Heart right ventricle (tissue), 16 donors: ENCODE measurements at regions of chr10 and their contacts with region 1.

Region 1: DNA sequence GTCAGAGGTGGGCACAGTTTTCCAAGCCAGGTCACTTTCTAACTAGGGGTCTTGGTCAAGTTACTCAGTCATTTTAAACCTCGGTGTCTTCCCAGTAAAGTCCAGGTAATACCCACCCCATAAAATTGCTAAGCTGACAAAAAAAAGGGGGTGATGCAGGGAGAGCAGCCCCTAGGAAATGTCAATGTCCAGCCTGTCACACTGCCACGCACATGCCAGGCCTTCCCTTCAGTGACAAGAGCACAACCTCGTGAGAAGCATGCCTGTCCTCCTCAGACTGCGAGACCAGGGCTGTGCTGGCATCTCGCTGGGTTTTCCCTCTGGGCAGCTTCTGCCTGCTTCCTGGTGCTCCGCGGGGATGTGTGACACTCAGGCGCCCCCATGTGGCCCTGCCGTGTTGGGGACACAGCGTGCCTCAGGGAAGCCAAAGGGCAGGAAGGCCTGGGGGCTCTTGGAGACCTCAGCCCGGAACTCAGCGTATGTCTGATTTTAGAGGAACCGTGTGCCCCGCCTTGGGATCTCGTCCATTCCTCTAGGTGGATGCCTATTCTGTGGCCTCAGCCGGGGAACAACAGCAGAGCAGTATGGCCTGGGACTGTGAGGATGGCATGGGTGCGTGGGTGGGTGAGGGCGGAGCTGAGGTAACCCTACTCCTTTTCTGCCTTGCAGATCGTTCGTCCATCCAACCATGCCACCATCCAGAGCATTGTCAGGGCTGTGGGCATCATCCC is 10.2 kb upstream of the GDF2 start:
- DNase-seq: peak; percentile 79 to 82
- ATAC-seq: peak; percentile 81 to 96 (median 94)
- H3K4me3 ChIP-seq: no peak overlapping the region
- H3K27ac ChIP-seq: no peak overlapping the region
- H3K4me1 ChIP-seq: peaks cover 0 to 13% (median 4%) of the 10 kb centered on the region in 9 donors
- H3K27me3 ChIP-seq: peaks cover 0 to 20% (median 6%) of the 10 kb centered on the region in 7 donors
- CTCF ChIP-seq: peak; percentile 59 to 94 (median 84)

Region 2: GRCh38 chr10:46175296-46175695 is 1136.8 kb before region 1 on chr10:
- intact Hi-C with region 1: loop called in 1 of 10 experiments (anchors 10 kb)
- DNase-seq: no peak
- ATAC-seq: no peak
- H3K4me3 ChIP-seq: no peak overlapping the region
- H3K27ac ChIP-seq: no peak overlapping the region
- H3K4me1 ChIP-seq: no peaks in the 10 kb centered on the region
- H3K27me3 ChIP-seq: peaks cover 0 to 15% (median 0%) of the 10 kb centered on the region in 7 donors
- CTCF ChIP-seq: no peak

Region 3: DNA sequence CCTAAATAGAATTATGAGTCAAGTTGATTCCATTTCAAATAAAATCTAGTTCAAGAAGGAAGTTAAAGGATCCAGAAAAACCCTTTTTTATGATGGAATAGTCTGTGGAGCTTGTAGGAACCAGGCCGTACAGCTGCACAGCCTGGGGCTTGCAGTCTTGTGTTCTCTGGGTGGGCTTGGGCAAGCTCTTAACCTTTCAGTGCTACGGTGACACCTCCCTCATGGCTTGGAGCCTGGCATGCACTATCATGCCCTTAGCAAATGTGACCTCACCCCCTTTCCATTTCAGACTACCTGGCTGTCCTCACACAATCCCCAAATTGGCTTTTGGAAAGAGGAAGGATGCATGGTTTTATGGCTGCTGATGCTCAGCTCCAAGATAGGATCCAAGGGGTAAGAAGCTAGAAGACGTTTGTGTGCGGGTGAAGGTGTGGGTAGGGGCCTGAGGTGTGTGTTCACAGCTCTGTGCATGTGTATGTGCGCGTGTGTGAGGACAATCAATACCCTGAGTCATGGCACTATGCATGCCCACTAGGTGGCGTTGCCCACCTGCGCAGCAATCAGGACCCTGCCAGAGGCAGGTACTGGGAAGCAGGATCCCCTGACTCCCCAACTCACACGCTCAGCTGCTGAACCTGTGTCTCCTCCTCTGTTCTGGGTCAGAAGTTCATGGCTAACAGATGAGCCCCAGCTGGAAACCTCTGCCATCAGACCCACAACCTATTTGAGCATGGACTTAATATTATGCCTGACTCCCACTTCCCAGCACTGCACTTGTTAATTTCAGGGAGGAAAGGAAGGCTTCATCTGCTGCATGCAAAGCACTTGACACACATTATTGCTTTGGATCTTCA is 287.5 kb before region 1 on chr10:
- intact Hi-C with region 1: loop called in 5 of 10 experiments (anchors 1 to 5 kb)
- DNase-seq: peak in 1 of 2 donors; percentile 62
- ATAC-seq: peak in 7 of 8 donors; percentile 66 to 72 (median 69)
- H3K4me3 ChIP-seq: no peak overlapping the region
- H3K27ac ChIP-seq: no peak overlapping the region
- H3K4me1 ChIP-seq: peaks cover 0 to 15% (median 0%) of the 10 kb centered on the region in 9 donors
- H3K27me3 ChIP-seq: no peaks in the 10 kb centered on the region
- CTCF ChIP-seq: peak; percentile 54 to 84 (median 76)

Region 4: DNA sequence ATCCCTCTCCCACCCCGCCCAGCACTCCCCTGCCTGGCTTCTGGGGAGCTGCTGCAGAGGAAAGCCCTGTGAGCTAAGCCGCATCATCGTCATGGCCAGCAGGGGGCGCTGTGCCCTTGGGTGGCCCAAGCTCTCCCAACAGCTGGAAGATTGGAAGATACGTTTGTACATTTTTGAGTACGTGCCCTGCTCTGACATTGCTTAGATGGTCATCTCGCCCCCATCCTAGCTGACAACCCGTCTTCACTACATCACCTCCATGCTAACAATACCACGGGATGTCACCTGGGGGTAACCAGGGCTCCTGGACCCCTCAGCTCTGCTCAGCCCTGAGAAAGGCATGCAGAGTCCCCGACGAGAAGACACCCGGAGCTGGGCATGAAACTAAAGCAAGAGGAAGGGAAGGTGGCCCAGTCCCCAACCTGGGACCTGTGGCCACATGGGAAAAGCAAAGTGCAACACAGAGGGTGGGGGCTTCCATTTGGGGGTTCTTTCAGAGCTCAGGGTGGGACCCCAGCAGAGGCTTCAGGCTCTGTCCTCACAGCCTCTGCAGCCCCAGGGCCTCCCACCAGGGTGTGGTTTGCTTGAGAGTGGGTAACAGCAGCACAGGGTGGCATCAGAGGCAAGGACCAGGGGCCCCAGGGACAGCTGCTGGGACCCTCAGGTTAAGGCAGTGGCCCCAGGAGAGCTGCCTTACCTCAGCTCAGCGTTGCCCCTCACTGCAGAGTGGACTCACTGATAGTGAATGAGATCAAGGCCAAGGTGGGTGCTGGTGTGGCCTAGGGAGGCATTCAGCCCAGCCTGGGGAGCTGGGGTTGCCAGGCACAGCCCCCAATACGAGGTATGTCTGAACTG is 264.2 kb before region 1 on chr10:
- intact Hi-C with region 1: loop called (anchors 1 to 5 kb)
- DNase-seq: peak; percentile 70 to 79
- ATAC-seq: peak in 7 of 8 donors; percentile 53 to 76 (median 69)
- H3K4me3 ChIP-seq: no peak overlapping the region
- H3K27ac ChIP-seq: no peak overlapping the region
- H3K4me1 ChIP-seq: peaks cover 0 to 12% (median 0%) of the 10 kb centered on the region in 9 donors
- H3K27me3 ChIP-seq: no peaks in the 10 kb centered on the region
- CTCF ChIP-seq: peak; percentile 78 to 93 (median 85)